Heart left ventricle (tissue), 16 donors: ENCODE measurements at regions of chr22 and their contacts with region 1.

Region 1: GRCh38 chr22:43636086-43636485 is 176.0 kb downstream of the EFCAB6 start:
- DNase-seq: no peak
- ATAC-seq: no peak
- H3K4me3 ChIP-seq: no peak overlapping the region
- H3K27ac ChIP-seq: no peak overlapping the region
- H3K4me1 ChIP-seq: no peaks in the 10 kb centered on the region
- H3K27me3 ChIP-seq: no peaks in the 10 kb centered on the region
- CTCF ChIP-seq: no peak
- POLR2A ChIP-seq: no peak

Region 2: GRCh38 chr22:43587565-43587964 is 48.5 kb before region 1 on chr22:
- intact Hi-C with region 1: loop called in 1 of 10 experiments (anchors 10 kb)
- DNase-seq: no peak
- ATAC-seq: no peak
- H3K4me3 ChIP-seq: no peak overlapping the region
- H3K27ac ChIP-seq: no peak overlapping the region
- H3K4me1 ChIP-seq: no peaks in the 10 kb centered on the region
- H3K27me3 ChIP-seq: no peaks in the 10 kb centered on the region
- CTCF ChIP-seq: no peak
- POLR2A ChIP-seq: no peak